Left cardiac atrium (tissue), 4 donors: ENCODE measurements at regions of chr6 and their contacts with region 1.

Region 1: DNA sequence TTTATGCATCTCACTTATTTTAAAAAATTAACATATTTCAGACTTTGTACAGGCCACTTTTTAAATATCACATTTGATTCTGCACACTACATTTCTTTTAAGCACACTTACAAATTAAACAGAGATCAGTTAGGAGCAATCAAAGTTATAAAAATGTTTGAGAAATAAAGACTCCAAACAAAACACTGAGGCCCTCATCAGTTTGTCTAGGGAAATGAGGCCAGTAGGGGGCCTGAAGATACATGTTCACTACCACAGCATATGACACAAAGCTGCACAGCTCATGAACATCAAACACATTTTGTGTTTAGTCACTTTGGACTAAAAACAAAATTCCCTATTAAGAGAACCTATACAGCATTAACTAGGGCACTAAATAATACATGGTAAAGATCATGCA is 180.5 kb downstream of the PDE7B start:
- DNase-seq: no peak
- ATAC-seq: peak; percentile 42 to 71

Region 2: DNA sequence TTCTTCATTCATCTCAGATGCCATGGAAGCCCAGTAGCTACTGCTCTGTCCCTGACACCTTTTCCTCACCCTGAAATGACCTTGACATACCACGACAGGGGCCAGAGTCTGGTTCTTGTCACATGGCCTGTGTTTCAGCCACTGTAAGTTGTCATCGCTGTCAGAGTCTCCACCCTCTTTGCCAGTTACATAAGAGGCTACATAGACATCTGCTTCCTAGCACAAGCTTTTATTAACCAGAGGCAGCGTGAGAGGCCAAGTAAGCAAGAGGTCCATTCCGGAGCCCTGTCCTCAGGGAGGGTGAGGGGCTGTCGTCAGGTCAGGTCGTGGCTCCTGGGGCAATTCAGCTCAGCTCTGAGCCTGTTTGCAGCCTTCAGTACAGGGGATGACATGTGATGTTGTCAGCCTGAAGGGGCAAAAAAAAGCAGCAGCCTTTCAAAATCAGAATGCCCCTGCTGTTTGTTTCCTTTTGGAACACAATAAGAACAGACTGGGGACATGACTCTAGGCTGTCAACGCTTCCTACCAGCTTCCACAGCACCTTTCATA is 71.9 kb after region 1 on chr6:
- intact Hi-C with region 1: loop called in 1 of 2 experiments (anchors 10 kb)
- DNase-seq: peak; percentile 46
- ATAC-seq: peak; percentile 96 to 97

Region 3: DNA sequence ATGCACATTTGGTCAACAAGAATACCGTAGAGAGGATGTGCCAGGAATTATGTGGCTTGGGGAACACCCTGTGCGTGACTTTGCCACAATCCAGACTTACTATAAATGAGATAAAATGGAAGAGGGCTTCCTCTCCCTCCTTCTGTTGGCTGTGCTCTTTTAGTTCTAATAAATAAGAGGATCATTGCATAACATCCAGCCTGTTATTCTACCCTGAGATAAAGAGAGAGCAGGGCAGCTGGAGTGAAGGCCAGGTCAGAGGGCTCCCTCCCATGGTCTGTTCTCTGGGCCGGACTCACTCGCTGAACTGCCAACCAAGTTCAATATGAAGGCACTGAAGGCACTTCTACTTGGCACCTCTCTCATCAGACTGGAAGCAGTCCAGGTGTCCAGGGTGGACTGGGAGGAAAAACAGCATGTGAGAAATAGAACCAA is 126.4 kb after region 1 on chr6:
- intact Hi-C with region 1: loop called in 1 of 2 experiments (anchors 10 kb)
- DNase-seq: peak; percentile 74
- ATAC-seq: peak; percentile 93 to 94

Region 4: GRCh38 chr6:136226027-136226673 is 194.2 kb after region 1 on chr6:
- intact Hi-C with region 1: loop called in 1 of 2 experiments (anchors 5 kb)
- DNase-seq: peak; percentile 45
- ATAC-seq: peak; percentile 77 to 88